Posterior vena cava (tissue), 2 donors: ENCODE measurements at regions of chr15 and their contacts with region 1.

Region 1: DNA sequence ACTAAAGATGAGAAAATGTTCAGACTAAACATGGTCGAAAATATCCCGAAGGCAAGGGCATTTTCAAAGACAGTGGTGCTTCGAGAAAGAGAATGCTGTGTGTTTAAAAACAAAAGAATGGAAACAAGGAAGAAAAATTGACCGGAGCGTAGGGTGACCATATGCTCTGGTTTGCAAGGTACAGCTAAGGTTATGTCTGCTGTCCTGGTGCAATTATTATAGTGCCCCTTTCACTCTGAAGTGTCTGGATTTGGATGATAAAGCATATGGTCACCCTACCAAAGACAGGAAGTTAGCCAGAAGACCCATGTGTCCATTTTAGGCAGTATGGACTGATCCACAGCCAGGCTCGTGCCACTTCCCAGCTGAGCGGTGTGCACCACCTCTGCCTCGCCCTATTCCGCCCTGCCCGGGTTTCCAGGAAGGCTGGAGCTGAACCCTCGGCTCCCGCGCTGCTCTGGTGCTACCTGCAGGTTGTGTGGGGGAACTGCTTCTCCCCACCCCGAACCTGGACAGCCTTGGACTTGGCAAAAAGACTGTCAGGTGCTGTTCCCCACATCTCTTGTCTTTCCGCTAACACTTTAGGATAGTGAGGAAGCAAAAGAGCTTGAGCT is 25.2 kb downstream of the GOLGA6D start:
- DNase-seq: no peak

Region 2: GRCh38 chr15:75229191-75230015 is 78.5 kb before region 1 on chr15:
- intact Hi-C with region 1: loop called in 1 of 2 experiments (anchors 10 kb)
- DNase-seq: peak; percentile 67

Region 3: DNA sequence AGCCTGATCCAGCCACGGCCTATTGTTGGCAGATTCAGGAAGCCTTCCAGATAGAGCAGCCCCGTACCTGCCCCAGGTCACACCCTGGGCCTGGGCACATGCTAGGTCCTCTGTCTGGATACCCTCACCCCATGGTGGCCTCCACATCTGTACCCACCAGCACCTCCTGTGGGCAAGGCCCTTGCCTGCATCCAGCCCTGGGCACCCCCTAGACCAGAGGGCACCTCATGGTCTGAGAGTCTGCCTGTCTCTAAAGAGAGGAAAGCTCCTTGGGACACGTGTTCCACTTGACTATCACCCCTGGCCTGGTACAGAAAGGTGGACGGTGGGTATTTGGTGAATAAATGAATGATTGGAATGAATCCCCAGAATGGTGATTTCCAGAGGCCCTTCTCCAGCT is 19.1 kb after region 1 on chr15:
- intact Hi-C with region 1: no loop called
- DNase-seq: no peak

Region 4: DNA sequence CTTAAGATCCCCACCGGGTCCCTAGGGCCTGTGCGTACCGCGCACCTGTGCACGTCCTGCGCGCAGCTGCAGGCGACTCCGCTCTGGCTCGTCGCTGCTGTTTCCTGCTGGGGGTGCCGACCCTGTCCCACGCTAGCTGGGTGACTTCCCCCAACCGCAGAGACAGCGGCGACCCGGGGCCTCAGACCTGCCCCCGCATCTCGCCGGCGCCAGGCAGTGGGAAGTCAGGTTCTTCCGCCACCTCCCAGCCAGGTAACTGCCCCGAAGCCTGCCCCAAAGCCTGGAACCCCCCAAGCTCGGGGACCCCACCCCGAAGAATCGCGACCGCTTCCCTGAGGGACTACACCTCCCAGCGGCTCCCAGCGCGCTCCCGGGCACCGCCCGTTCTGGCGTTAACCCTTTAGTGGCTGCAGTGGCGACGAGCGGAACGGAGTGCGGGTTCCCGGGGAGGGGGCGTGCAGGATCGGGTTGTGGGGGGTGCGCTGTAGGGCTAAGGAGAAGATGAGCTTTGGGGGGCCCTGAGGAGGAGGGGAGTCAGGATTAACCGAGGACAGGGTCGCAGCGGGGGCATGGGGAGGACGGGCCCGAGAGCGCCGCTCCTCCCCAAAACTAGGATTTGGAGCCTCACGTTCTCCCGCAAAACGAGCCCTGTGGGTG is 39.5 kb after region 1 on chr15:
- intact Hi-C with region 1: no loop called
- DNase-seq: peak; percentile 87